Caco-2 (cell line): ENCODE measurements at regions of chr1 and their contacts with region 1.

Region 1: GRCh38 chr1:54372978-54373377 is 33.2 kb downstream of the SSBP3 start:
- DNase-seq: no peak
- H3K4me3 ChIP-seq: no peak overlapping the region
- H3K4me3 Mint-ChIP-seq: no peak overlapping the region
- H3K27ac Mint-ChIP-seq: no peak overlapping the region
- H3K4me1 ChIP-seq: no peaks in the 10 kb centered on the region
- H3K4me1 Mint-ChIP-seq: peaks cover 9% of the 10 kb centered on the region
- H3K27me3 ChIP-seq: no peaks in the 10 kb centered on the region
- H3K27me3 Mint-ChIP-seq: no peaks in the 10 kb centered on the region
- CTCF ChIP-seq: no peak

Region 2: GRCh38 chr1:54355931-54356679 is 16.9 kb before region 1 on chr1:
- CTCF ChIA-PET with region 1: no interaction called
- POLR2A ChIA-PET with region 1: no interaction called
- intact Hi-C with region 1: loop called (anchors 1 kb)
- DNase-seq: peak; percentile 50 to 69
- H3K4me3 ChIP-seq: peak overlapping the region; percentile 5; the same call in 1 of the 2 replicates
- H3K4me3 Mint-ChIP-seq: peak overlapping the region; percentile 57
- H3K27ac Mint-ChIP-seq: peak overlapping the region; percentile 90
- H3K4me1 ChIP-seq: peaks cover 38% of the 10 kb centered on the region
- H3K4me1 Mint-ChIP-seq: peaks cover 11% of the 10 kb centered on the region
- H3K27me3 ChIP-seq: no peaks in the 10 kb centered on the region
- H3K27me3 Mint-ChIP-seq: no peaks in the 10 kb centered on the region
- CTCF ChIP-seq: no peak